Transverse colon (tissue), 4 donors: ENCODE measurements at regions of chr17 and their contacts with region 1.

Region 1: DNA sequence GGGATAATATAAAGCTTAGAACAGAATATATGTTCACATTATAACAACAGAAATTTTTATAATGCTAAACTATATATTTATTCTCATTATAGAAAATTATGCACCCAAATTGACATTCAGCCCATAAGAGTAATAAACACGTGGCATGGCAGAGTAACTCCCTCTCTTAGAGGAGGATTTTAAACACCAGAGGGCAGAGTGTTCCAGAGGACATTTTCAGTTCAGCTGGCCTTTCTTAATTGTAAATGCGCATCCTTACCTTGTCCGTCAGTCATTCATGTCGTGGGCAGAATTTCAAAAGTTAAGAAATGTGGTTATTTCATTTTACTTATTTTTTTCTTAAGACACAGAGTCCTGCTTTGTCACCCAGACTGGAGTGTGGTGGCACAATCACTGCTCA is 147.1 kb downstream of the TANC2 start:
- DNase-seq: no peak
- H3K4me3 ChIP-seq: no peak overlapping the region
- H3K27ac ChIP-seq: no peak overlapping the region
- H3K4me1 ChIP-seq: no peaks in the 10 kb centered on the region
- H3K27me3 ChIP-seq: no peaks in the 10 kb centered on the region
- CTCF ChIP-seq: peak in 2 of 5 experiments; percentile 14 to 26
- EP300 ChIP-seq: no peak
- POLR2A ChIP-seq: no peak

Region 2: DNA sequence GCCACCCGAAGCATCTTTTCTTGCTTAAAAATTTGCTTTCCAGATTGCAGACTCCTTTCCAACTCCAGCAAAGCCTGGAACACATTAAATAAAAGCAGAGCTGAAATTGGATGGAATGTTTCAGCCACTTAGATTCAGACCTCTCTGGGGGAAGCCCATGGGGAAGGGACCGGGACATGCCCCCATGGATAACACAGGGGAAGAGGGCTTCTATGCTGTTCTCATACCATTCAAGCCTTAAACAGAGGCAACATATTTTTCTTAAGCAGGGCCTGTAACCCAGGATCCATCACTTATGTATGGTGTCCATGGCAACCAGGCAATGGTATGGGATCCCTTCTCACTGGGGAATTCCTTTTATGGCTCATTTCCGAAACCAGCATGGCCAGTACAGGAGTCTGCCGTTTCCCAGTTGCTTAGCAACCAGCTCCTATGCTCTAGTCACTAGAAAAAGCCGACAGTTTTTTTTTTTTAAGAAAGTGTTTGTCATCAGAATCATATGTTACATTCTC is 243.1 kb before region 1 on chr17:
- in situ Hi-C with region 1: no loop called
- intact Hi-C with region 1: no loop called
- DNase-seq: no peak
- H3K4me3 ChIP-seq: no peak overlapping the region
- H3K27ac ChIP-seq: no peak overlapping the region
- H3K4me1 ChIP-seq: no peaks in the 10 kb centered on the region
- H3K27me3 ChIP-seq: peaks cover 3% of the 10 kb centered on the region
- CTCF ChIP-seq: no peak
- EP300 ChIP-seq: no peak
- POLR2A ChIP-seq: no peak

Region 3: GRCh38 chr17:63193827-63194226 is 80.6 kb after region 1 on chr17:
- in situ Hi-C with region 1: no loop called
- intact Hi-C with region 1: no loop called
- DNase-seq: no peak
- H3K4me3 ChIP-seq: no peak overlapping the region
- H3K27ac ChIP-seq: no peak overlapping the region
- H3K4me1 ChIP-seq: no peaks in the 10 kb centered on the region
- H3K27me3 ChIP-seq: no peaks in the 10 kb centered on the region
- CTCF ChIP-seq: no peak
- EP300 ChIP-seq: no peak
- POLR2A ChIP-seq: no peak

Region 4: DNA sequence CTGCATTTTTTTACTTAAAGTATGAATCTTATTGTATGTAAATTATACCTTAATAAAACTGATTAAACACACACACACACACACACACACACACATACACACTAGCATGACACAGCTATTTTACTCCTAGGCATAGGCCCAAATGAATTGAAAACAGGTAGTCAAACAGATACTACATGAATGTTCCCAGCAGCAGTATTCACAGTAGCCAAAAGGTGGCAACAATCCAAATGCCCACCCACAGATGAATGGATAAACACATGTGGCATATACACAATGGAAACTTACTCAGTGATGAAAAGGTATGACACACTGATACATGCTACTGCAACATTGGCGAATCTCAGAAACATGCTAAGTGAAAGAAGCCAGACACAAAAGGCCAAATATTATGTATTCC is 109.5 kb after region 1 on chr17:
- in situ Hi-C with region 1: loop called in 1 of 4 experiments (anchors 25 kb)
- intact Hi-C with region 1: no loop called
- DNase-seq: no peak
- H3K4me3 ChIP-seq: no peak overlapping the region
- H3K27ac ChIP-seq: no peak overlapping the region
- H3K4me1 ChIP-seq: no peaks in the 10 kb centered on the region
- H3K27me3 ChIP-seq: no peaks in the 10 kb centered on the region
- CTCF ChIP-seq: no peak
- EP300 ChIP-seq: no peak
- POLR2A ChIP-seq: no peak